A673 (cell line): ENCODE measurements at regions of chr11 and their contacts with region 1.

Region 1: DNA sequence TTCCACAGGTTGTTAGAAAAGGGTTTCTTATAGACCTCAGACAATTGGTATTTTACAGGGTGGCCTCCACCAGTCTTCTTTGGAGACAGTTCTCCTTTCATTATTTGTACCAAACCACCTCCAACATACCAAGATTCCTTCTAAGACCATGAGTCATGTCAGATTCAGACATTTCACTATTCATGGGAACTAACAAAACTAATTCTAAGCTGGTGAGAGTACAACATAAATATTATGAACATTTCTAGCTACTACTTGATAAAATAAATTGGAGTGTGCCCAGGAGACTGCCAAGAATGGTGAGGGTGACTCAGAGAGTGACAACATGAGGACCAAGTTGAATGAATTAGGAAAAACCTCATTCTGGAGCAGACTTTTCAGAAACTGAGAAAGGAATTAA is 494.6 kb upstream of the LRRC4C start:
- DNase-seq: peak; percentile 21
- H3K4me3 ChIP-seq: no peak overlapping the region
- H3K27ac ChIP-seq: no peak overlapping the region
- H3K4me1 ChIP-seq: no peaks in the 10 kb centered on the region
- H3K27me3 ChIP-seq: no peaks in the 10 kb centered on the region
- CTCF ChIP-seq: no peak

Region 2: DNA sequence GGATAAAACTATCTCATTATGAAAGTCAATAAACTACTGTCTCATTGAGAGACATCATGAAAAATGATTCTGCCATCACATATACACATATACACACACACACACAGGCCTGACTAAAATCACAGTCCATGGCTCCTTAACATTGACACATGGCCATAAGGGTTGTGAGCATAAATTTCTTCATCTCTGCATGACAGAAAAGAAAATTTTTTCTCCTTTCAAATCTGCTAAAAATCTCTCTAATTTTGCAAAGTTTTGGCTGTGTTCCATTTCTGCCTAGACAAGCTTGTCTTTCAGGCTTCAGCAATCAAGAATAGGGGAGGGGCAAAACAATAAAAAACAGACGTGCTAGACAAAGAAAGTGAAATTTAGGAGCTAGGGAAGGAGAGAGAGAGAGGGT is 819.1 kb before region 1 on chr11:
- CTCF ChIA-PET with region 1: no interaction called
- POLR2A ChIA-PET with region 1: no interaction called
- intact Hi-C with region 1: no loop called
- DNase-seq: no peak
- H3K4me3 ChIP-seq: no peak overlapping the region
- H3K27ac ChIP-seq: no peak overlapping the region
- H3K4me1 ChIP-seq: no peaks in the 10 kb centered on the region
- H3K27me3 ChIP-seq: no peaks in the 10 kb centered on the region
- CTCF ChIP-seq: no peak

Region 3: DNA sequence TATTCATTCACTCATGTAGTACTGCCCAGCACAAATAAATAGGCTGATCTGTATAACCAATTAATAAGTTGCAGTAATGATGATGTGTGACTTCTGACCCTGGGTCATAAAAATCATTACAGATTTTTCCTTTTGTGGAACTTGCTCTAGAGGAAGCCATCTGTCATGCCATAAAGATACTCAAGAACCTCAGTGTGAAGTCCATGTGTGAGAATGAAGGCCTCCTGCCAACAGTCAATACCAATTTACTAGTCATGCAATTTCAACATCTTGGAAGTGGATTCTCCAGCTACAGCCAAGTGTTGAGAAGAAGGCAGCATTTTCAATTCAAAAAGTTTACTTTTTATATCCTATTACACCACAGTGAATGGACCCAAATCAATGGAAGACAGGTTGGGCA is 59.0 kb before region 1 on chr11:
- CTCF ChIA-PET with region 1: no interaction called
- POLR2A ChIA-PET with region 1: no interaction called
- intact Hi-C with region 1: loop called (anchors 5 kb)
- DNase-seq: no peak
- H3K4me3 ChIP-seq: no peak overlapping the region
- H3K27ac ChIP-seq: no peak overlapping the region
- H3K4me1 ChIP-seq: no peaks in the 10 kb centered on the region
- H3K27me3 ChIP-seq: no peaks in the 10 kb centered on the region
- CTCF ChIP-seq: no peak

Region 4: DNA sequence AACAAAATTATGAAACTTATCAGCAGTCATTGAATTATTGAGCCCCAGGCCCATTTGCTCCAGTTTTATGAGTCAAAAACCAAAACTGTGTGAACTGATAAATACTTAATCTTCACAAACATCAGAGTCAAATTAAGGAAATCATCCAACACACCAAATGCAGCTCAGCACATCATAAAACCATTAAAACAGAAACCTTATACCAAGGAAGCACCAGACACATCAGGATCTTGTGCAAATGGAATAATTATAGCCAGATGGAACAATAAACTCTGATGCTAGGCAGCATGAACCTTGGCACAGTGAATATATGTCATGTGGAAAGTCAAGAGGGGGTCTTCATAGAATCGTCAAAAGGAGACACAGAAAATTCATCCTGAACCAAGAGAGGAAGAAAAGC is 947.0 kb after region 1 on chr11:
- CTCF ChIA-PET with region 1: no interaction called
- POLR2A ChIA-PET with region 1: no interaction called
- intact Hi-C with region 1: no loop called
- DNase-seq: peak; percentile 12
- H3K4me3 ChIP-seq: no peak overlapping the region
- H3K27ac ChIP-seq: no peak overlapping the region
- H3K4me1 ChIP-seq: no peaks in the 10 kb centered on the region
- H3K27me3 ChIP-seq: no peaks in the 10 kb centered on the region
- CTCF ChIP-seq: no peak